Calu3 (cell line): ENCODE measurements at regions of chr2 and their contacts with region 1.

Region 1: DNA sequence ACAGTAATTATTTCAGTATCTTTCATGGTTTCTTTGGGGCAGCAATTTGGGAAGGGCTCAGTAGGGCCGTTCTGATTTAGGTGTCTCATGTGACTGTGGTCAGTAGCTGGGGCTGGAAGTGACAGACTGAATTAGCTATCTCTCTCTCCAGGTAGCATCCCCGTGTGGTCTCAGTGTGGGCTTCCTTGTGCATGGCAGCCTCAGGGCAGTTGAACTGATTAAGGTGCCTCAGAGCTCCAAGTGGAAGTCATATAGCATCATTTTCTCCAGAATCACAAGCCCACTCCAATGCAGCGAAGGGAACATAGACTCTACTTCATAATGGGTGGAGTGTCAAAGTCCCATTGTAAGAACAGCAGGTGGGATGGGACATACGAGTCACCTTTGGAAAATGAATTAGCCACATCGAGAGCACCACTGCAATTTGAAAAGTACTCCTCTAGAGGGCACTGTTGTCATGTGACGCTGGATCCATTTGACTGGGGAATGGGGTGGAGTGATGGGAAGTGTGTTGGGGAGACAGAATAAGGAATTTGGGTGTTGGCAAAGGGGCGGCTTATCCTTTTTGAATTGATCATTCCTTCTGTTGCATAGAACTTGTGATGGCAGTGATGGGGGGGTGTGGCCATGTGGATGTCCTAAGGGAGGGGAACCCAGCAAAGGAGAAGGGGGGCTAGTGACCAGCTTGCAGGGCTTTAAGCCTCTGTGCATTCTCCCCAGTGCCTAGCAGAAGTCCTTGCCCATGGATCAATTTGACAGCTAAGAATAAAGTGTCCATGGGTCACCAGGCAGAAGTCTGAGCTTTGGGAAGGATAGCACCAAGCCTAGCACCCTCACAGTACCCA is 39.3 kb upstream of the FAM136A start:
- DNase-seq: peak; percentile 65
- H3K4me3 Mint-ChIP-seq: no peak overlapping the region
- H3K27ac Mint-ChIP-seq: no peak overlapping the region
- H3K4me1 Mint-ChIP-seq: peaks cover 20% of the 10 kb centered on the region
- H3K27me3 Mint-ChIP-seq: no peaks in the 10 kb centered on the region
- CTCF ChIP-seq: peak; percentile 77

Region 2: DNA sequence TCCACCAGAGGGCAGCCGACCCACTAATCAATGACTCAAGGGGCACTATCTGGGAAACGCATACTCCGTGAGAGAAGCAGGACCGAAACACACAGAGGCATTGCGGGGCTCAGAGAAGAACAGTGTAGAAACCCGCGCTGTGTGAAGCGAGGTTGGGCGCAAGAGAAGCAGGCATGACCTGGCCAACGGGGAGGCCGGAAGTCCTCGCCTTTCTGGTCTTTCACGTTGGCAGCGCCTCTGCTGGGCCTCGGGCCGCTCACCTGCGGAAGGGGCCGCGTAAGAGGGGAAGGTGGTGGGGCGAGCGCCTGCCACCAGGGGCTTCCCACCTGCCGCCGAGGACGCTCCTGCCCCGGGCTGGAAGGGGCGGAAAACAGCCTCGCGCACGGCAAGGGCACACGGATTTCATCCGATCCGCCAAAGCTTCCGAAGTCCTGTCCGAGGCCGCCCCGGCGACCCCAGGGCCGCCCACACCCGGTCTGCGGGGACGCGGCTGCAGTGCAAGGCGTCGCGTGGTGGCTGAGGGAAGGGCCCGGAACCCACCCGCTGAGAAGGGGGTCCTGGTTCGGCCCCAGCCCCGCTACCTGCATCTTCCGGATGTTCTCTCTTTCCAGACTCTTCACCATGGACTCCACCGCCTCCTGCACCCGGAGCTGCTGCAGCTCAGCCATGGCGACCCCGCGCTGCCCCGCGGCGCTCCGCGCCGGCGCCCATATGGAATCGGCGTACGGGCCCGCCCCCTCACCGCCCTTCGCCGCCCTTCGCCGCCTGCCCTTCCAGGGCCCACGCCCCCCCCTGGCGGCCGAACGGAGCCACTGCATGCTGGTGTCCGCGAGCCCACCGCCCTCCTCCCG is 39.6 kb before region 1 on chr2 and contains the start of gene FAM136A:
- CTCF ChIA-PET with region 1: interaction called, 8 read pairs
- intact Hi-C with region 1: loop called (anchors 2 kb)
- DNase-seq: peak; percentile 94
- H3K4me3 Mint-ChIP-seq: peak within 1 kb of the TSS; percentile 90
- H3K27ac Mint-ChIP-seq: peak within 1 kb of the TSS; percentile 94
- H3K4me1 Mint-ChIP-seq: peaks cover 10% of the 10 kb centered on the region
- H3K27me3 Mint-ChIP-seq: no peaks in the 10 kb centered on the region
- CTCF ChIP-seq: peak; percentile 76
- total RNA-seq, gene FAM136A: 53.7 and 60.4 TPM in 2 replicates

Region 3: DNA sequence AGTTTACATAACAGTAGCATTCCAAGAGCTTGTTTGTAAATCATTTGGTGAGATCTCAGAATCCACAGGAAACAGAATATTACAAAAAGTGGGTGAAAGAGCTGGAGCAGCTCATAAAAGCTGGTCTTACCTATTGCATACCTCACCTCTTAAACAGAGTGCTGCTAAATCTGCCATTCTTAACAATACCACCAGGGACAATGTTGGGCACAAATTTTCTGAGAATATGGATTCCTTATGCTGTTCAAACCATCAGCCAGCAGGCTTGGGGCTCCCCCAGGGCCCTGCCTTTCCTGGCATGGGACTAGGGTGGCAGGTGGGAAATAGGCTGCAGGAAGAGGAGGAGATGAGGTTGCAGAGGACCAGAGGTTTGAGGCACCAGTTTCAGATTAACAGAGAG is 156.9 kb after region 1 on chr2:
- CTCF ChIA-PET with region 1: no interaction called
- intact Hi-C with region 1: loop called (anchors 10 kb)
- DNase-seq: peak; percentile 37
- H3K4me3 Mint-ChIP-seq: no peak overlapping the region
- H3K27ac Mint-ChIP-seq: no peak overlapping the region
- H3K4me1 Mint-ChIP-seq: peaks cover 38% of the 10 kb centered on the region
- H3K27me3 Mint-ChIP-seq: no peaks in the 10 kb centered on the region
- CTCF ChIP-seq: peak; percentile 38

Region 4: DNA sequence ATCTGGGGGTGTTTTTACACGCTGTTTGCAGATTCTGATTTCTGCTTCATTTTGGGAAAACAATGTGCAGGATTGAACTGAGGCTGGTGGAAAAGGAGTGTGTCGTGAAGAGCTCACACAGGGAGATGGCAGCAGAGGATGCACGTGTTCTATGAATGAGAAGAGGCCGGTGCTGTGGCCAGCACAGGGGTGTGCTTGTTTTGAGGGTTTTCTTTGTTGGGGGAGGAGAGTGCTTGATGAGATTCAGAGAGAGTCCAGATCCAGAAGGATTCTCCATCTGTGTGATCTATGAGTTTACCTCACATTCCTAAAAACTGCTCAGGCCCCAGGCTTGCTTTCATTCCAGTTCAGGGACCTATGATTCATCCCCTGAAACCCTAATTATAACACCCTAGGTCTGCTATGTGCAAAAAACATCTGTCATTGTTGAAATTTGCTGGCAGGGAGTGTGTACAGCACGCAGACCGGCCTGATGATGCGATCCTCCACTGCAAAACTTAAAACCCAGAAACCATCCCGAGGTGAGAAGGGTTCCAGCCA is 200.4 kb after region 1 on chr2:
- CTCF ChIA-PET with region 1: no interaction called
- intact Hi-C with region 1: no loop called
- DNase-seq: no peak
- H3K4me3 Mint-ChIP-seq: no peak overlapping the region
- H3K27ac Mint-ChIP-seq: no peak overlapping the region
- H3K4me1 Mint-ChIP-seq: peaks cover 36% of the 10 kb centered on the region
- H3K27me3 Mint-ChIP-seq: no peaks in the 10 kb centered on the region
- CTCF ChIP-seq: no peak

Region 5: DNA sequence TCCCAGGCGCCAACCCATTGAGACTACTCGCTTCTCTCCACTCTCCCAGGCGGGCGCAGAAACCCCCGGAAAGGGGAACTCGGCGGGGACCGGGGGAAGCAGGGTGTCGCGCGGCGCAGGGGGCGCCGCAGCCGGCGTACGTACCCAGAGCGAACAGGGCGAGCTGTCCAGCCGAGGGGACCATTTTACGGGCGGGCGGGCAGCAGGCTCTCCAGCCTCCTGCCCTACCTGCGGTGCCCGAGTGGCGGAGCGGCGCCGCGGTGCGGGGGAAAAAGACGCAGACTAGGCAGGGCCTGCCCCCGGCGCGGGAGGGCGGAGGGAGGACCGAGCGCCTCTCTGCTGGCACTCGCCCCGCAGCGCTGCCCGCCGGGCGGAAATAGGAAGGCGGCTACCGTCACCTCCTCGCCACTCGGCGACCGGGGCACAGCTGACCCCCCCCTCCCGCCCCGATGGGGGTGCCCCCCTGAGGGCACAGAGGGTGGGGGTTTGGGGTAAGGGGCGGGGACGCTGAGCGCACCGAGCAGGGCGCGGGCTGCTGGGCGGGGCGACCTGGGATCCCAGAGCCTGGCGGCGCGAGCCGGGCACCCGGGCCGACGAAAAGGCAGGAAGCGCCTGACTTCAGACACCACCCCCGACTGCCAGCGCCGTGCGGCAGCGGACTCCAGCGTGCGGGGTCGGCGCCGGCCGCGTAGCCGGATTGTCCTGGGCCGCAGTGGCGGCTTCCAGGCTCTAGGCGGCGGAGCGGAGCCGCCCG is 212.6 kb after region 1 on chr2 and contains the start of gene TGFA:
- CTCF ChIA-PET with region 1: interaction called, 3 read pairs
- intact Hi-C with region 1: loop called (anchors 5 kb)
- DNase-seq: peak; percentile 96
- H3K4me3 Mint-ChIP-seq: peak within 1 kb of the TSS; percentile 99
- H3K27ac Mint-ChIP-seq: peak within 1 kb of the TSS; percentile 95
- H3K4me1 Mint-ChIP-seq: peaks cover 39% of the 10 kb centered on the region
- H3K27me3 Mint-ChIP-seq: no peaks in the 10 kb centered on the region
- CTCF ChIP-seq: no peak
- total RNA-seq, gene TGFA: 80.0 and 104 TPM in 2 replicates

Region 6: GRCh38 chr2:70616168-70616694 is 275.1 kb after region 1 on chr2:
- CTCF ChIA-PET with region 1: interaction called, 15 read pairs
- intact Hi-C with region 1: loop called (anchors 1 kb)
- DNase-seq: peak; percentile 14
- H3K4me3 Mint-ChIP-seq: no peak overlapping the region
- H3K27ac Mint-ChIP-seq: no peak overlapping the region
- H3K4me1 Mint-ChIP-seq: peaks cover 16% of the 10 kb centered on the region
- H3K27me3 Mint-ChIP-seq: no peaks in the 10 kb centered on the region
- CTCF ChIP-seq: no peak

Region 7: GRCh38 chr2:70647873-70648481 is 306.8 kb after region 1 on chr2:
- CTCF ChIA-PET with region 1: interaction called, 5 read pairs
- intact Hi-C with region 1: loop called (anchors 1 kb)
- DNase-seq: peak; percentile 86
- H3K4me3 Mint-ChIP-seq: no peak overlapping the region
- H3K27ac Mint-ChIP-seq: no peak overlapping the region
- H3K4me1 Mint-ChIP-seq: no peaks in the 10 kb centered on the region
- H3K27me3 Mint-ChIP-seq: peaks cover 37% of the 10 kb centered on the region
- CTCF ChIP-seq: peak; percentile 94

Region 8: GRCh38 chr2:71313016-71313766 is 972.0 kb after region 1 on chr2:
- CTCF ChIA-PET with region 1: no interaction called
- intact Hi-C with region 1: no loop called
- DNase-seq: no peak
- H3K4me3 Mint-ChIP-seq: no peak overlapping the region
- H3K27ac Mint-ChIP-seq: no peak overlapping the region
- H3K4me1 Mint-ChIP-seq: no peaks in the 10 kb centered on the region
- H3K27me3 Mint-ChIP-seq: no peaks in the 10 kb centered on the region
- CTCF ChIP-seq: no peak